ENCODE measurements at regions of chr3 and their contacts with region 1.

Region 1: DNA sequence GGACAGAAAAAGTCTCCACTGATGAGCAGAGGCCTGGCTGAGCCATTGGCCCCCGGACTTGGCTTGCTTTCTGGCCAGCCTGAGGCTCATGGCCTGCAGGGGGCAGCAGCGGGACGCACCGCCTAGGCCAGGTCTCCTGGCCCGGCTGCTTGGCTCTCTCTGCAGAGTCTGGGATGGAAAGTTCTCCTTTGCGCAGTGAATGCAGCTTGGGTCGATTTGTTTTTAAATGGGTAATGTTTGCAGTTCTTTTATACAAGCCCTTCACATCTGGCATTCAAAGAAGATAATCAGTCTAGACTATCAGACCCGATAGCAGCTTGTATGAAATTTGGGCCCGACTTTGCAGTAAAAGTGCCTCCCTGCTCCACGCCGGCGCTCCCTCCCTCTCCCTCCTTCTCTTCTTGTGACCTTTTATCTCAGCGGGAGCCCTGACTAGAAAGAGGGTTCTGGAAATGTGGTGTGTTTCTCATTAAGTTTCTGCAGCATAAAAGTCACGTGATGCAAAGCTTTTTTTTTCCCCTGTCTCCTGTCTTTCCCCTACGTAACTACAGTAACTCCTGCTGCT is 59.9 kb downstream of the ZNF621 start:
- DNase-seq: peak; percentile 80 to 90 (median 87)
- ATAC-seq: peak; percentile 97
- H3K4me3 ChIP-seq: no peak overlapping the region
- H3K27ac ChIP-seq: no peak overlapping the region
- H3K4me1 ChIP-seq: 0 out of 5 replicates have a peak, but pooled peaks cover 0 to 3% of the 10 kb centered on the region in 2 experiments
- H3K27me3 ChIP-seq: peaks cover 6 to 32% of the 10 kb centered on the region in 2 experiments; a peak in 3 of 5 replicates
- CTCF ChIP-seq: peak; percentile 94 to 99 (median 94)
- EP300 ChIP-seq: no peak
- POLR2A ChIP-seq: no peak
- RAD21 ChIP-seq: peak; percentile 94 to 96

Region 2: GRCh38 chr3:40191850-40192448 is 392.8 kb before region 1 on chr3:
- CTCF ChIA-PET with region 1: no interaction called
- POLR2A ChIA-PET with region 1: no interaction called
- in situ Hi-C with region 1: no loop called
- intact Hi-C with region 1: loop called (anchors 5 kb)
- DNase-seq: peak; percentile 78 to 83 (median 81)
- ATAC-seq: peak; percentile 83
- H3K4me3 ChIP-seq: no peak overlapping the region
- H3K27ac ChIP-seq: no peak overlapping the region
- H3K4me1 ChIP-seq: peaks cover 3 to 9% of the 10 kb centered on the region in 2 experiments; a peak in 2 of 5 replicates
- H3K27me3 ChIP-seq: peaks cover 0 to 34% of the 10 kb centered on the region in 2 experiments; a peak in 2 of 5 replicates
- CTCF ChIP-seq: peak; percentile 87 to 98 (median 91)
- EP300 ChIP-seq: no peak
- POLR2A ChIP-seq: no peak
- RAD21 ChIP-seq: peak; percentile 89 to 93

Region 3: GRCh38 chr3:40387001-40387894 is 197.5 kb before region 1 on chr3 and contains the start of gene ENTPD3:
- CTCF ChIA-PET with region 1: no interaction called
- POLR2A ChIA-PET with region 1: no interaction called
- in situ Hi-C with region 1: no loop called
- intact Hi-C with region 1: no loop called
- DNase-seq: peak; percentile 82 to 90 (median 86)
- ATAC-seq: peak; percentile 94
- H3K4me3 ChIP-seq: peak within 1 kb of the TSS; percentile 35
- H3K27ac ChIP-seq: no peak within 1 kb of the TSS
- H3K4me1 ChIP-seq: peaks cover 20 to 26% of the 10 kb centered on the region in 2 experiments; a peak in 4 of 5 replicates
- H3K27me3 ChIP-seq: no peaks in the 10 kb centered on the region
- CTCF ChIP-seq: peak in 2 of 3 experiments; percentile 12 to 30; a peak in 1 of 6 replicates
- EP300 ChIP-seq: no peak
- POLR2A ChIP-seq: no peak
- RAD21 ChIP-seq: no peak
- polyA plus RNA-seq, gene ENTPD3: 0.56 to 0.73 TPM

Region 4: GRCh38 chr3:40780291-40780924 is 195.7 kb after region 1 on chr3:
- CTCF ChIA-PET with region 1: no interaction called
- POLR2A ChIA-PET with region 1: no interaction called
- in situ Hi-C with region 1: no loop called
- intact Hi-C with region 1: loop called (anchors 5 kb)
- DNase-seq: peak in 1 of 4 experiments; percentile 11
- ATAC-seq: peak; percentile 80
- H3K4me3 ChIP-seq: no peak overlapping the region
- H3K27ac ChIP-seq: no peak overlapping the region
- H3K4me1 ChIP-seq: no peaks in the 10 kb centered on the region
- H3K27me3 ChIP-seq: peaks cover 2 to 24% of the 10 kb centered on the region in 2 experiments; a peak in 2 of 5 replicates
- CTCF ChIP-seq: no peak
- EP300 ChIP-seq: no peak
- POLR2A ChIP-seq: no peak
- RAD21 ChIP-seq: no peak

Region 5: DNA sequence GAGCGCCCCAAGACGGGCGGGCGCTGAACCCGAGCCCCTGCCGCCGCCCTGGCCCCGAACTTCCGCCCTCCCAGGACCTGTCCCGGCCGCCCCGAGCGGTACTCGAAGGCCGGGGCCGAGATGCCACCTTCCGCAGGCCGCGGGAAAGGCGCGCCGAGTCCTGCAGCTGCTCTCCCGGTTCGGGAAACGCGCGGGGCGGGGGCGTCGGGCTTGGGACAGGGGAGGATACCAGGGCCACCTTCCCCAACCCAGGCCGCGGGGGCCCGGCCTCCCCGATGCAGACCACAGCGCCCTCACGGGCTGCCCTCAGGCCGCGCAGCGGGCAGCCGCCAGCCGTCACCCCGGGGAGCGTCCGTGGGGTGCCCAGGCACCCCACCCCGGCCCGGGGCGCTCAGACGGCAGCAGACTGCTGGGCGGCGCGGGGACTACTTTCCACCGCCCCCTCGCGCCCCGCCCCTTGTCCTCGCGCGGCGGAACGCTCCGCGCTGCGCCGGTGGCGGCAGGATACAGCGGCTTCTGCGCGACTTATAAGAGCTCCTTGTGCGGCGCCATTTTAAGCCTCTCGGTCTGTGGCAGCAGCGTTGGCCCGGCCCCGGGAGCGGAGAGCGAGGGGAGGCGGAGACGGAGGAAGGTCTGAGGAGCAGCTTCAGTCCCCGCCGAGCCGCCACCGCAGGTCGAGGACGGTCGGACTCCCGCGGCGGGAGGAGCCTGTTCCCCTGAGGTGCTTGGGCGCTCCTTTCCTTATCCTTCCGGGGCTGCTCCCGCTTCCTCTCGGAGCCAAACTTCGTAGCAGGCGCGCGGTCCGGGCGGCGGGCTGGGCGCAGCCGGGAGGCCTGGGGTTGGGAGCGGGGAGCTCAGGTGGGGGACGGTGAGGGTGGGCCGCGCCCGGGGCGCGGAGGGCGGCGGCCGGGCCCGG is 614.5 kb after region 1 on chr3 and contains the start of gene CTNNB1:
- CTCF ChIA-PET with region 1: no interaction called
- POLR2A ChIA-PET with region 1: no interaction called
- in situ Hi-C with region 1: no loop called
- intact Hi-C with region 1: loop called (anchors 10 kb)
- DNase-seq: peak; percentile 82 to 97 (median 84)
- ATAC-seq: peak; percentile 84
- H3K4me3 ChIP-seq: peak within 1 kb of the TSS; percentile 90
- H3K27ac ChIP-seq: peak within 1 kb of the TSS; percentile 94
- H3K4me1 ChIP-seq: peaks cover 9 to 16% of the 10 kb centered on the region in 2 experiments; a peak in 4 of 5 replicates
- H3K27me3 ChIP-seq: peaks cover 5 to 28% of the 10 kb centered on the region in 2 experiments; a peak in 4 of 5 replicates
- CTCF ChIP-seq: no peak
- EP300 ChIP-seq: 0 out of 2 replicates have a peak, but pooled peaks have one; percentile 27
- POLR2A ChIP-seq: peak; percentile 99
- RAD21 ChIP-seq: peak; percentile 22 to 30; a peak in 2 of 4 replicates
- polyA plus RNA-seq, gene CTNNB1: 44.3 to 51.8 TPM

Region 6: GRCh38 chr3:41881233-41881821 is 1296.6 kb after region 1 on chr3:
- CTCF ChIA-PET with region 1: interaction called, 21 read pairs
- POLR2A ChIA-PET with region 1: no interaction called
- in situ Hi-C with region 1: loop called (anchors 5 kb)
- intact Hi-C with region 1: loop called (anchors 1 kb)
- DNase-seq: peak in 3 of 4 experiments; percentile 23 to 61 (median 25)
- ATAC-seq: no peak
- H3K4me3 ChIP-seq: no peak overlapping the region
- H3K27ac ChIP-seq: no peak overlapping the region
- H3K4me1 ChIP-seq: no peaks in the 10 kb centered on the region
- H3K27me3 ChIP-seq: peaks cover 0 to 6% of the 10 kb centered on the region in 2 experiments; a peak in 2 of 5 replicates
- CTCF ChIP-seq: peak; percentile 55 to 89 (median 56)
- EP300 ChIP-seq: no peak
- POLR2A ChIP-seq: no peak
- RAD21 ChIP-seq: peak; percentile 76 to 84